ENCODE measurements at regions of chrX and their contacts with region 1.

Region 1: GRCh38 chrX:20066968-20067708 is 49.6 kb downstream of the MAP7D2 start:
- DNase-seq: peak; percentile 35
- ATAC-seq: peak; percentile 76
- H3K4me3 ChIP-seq: no peak overlapping the region
- H3K27ac ChIP-seq: no peak overlapping the region
- H3K4me1 ChIP-seq: peaks cover 10% of the 10 kb centered on the region
- H3K27me3 ChIP-seq: no peaks in the 10 kb centered on the region
- CTCF ChIP-seq: peak; percentile 74
- EP300 ChIP-seq: no peak
- POLR2A ChIP-seq: no peak
- RAD21 ChIP-seq: 0 out of 2 replicates have a peak, but pooled peaks have one; percentile 46

Region 2: DNA sequence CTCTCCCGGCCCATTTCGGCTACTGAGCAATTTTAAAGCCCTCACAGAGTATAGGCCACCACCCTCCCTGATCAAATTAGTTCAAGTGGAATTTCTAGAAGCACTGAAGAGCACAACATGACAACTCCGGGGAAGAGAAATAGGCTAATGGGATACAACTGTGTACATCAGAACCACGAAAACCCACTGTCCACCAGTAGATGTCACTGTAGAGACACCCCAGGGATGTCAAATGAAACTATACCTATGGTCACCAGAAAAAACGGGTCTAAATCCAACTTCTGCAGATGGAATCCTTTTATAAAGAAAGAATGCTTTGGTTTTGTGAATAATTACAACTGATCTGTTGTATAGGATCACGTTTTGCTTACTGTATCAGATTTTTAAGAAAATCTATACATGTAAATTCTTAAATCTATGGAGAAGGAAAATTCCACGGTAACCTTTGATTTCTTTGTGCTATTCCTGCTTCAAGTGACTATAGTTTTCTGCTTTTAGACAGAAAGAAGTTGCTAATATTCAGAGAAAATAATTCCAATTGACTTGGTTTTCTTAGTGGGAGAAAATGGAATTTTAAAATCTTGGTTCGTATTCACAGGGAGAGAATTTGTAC is 522.3 kb before region 1 on chrX:
- CTCF ChIA-PET with region 1: no interaction called
- POLR2A ChIA-PET with region 1: no interaction called
- in situ Hi-C with region 1: no loop called
- intact Hi-C with region 1: loop called (anchors 2 kb)
- DNase-seq: peak; percentile 34
- ATAC-seq: peak; percentile 75
- H3K4me3 ChIP-seq: no peak overlapping the region
- H3K27ac ChIP-seq: no peak overlapping the region
- H3K4me1 ChIP-seq: no peaks in the 10 kb centered on the region
- H3K27me3 ChIP-seq: no peaks in the 10 kb centered on the region
- CTCF ChIP-seq: peak; percentile 68
- EP300 ChIP-seq: no peak
- POLR2A ChIP-seq: no peak
- RAD21 ChIP-seq: peak; percentile 44; the same call in 1 of the 2 replicates

Region 3: DNA sequence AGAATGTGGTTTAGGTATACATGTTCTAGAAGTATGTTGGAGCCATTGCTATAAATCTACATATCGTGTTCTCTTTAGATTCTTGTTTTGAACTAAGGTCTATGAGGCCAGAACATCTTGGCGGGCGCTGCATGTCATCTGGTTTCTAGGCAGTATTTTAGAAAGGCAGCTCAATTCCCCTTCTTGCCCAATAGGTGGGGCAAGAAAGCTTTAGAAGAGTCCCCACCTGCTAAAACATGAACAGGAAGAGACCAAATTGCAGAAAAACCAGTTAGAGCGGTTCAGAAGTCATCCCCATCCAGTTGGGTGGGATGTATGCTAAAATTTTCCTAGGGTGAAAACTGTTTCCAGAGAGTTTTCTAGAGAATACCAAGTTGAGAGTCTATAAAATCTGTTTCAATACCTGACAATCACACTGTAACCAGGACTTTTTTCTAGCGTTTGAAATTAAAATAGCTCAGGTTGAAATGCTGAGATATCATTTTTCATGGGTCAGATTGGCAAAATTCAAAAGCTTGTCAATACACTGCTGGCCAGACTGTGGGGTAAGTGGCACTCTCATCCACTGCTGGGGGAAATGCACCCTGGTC is 162.3 kb before region 1 on chrX:
- CTCF ChIA-PET with region 1: interaction called, 12 read pairs
- POLR2A ChIA-PET with region 1: no interaction called
- in situ Hi-C with region 1: loop called (anchors 10 kb)
- intact Hi-C with region 1: no loop called
- DNase-seq: peak; percentile 31
- ATAC-seq: peak; percentile 69
- H3K4me3 ChIP-seq: no peak overlapping the region
- H3K27ac ChIP-seq: no peak overlapping the region
- H3K4me1 ChIP-seq: no peaks in the 10 kb centered on the region
- H3K27me3 ChIP-seq: no peaks in the 10 kb centered on the region
- CTCF ChIP-seq: peak; percentile 71
- EP300 ChIP-seq: no peak
- POLR2A ChIP-seq: no peak
- RAD21 ChIP-seq: peak; percentile 35; the same call in 1 of the 2 replicates

Region 4: DNA sequence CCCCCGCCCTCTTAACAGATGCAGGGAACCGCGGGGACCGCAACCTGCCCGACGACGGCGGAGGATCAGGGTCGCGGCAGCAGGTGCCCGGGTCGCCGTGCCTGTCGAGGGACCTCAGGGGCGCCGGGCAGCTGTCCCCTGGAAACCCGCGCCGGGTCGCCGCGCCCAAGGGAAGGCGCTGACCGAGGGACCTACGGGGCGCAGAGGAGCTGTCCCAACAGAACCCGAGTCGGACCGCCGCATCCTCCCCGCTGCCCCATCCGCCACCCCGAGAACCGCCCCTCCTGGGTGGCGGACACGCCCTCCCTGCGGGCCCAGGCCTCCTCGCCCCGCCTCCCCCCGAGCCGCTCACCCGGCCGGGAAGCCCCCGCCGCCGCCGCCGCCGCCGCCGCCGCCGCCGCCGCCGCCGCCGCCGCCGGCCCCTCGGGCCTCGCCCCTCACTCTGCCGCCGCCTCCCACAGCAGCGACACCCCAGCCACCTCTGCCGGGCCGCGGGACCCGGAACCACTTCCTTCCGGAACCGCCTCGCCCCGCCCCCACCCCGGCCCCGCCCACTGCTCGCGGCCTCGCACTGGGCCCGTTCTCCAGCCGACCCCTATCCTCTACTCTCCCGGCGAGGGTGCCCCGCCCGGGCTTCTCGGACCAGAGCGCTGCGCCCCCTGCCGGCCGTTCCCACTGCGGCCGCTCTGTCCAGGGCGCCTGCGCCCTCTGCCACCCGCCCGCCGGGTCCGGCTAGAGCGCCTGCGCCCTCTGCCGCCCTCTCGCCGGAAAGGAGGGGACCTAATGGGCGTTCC is 76.4 kb before region 1 on chrX and contains the start of gene BCLAF3:
- CTCF ChIA-PET with region 1: interaction called, 4 read pairs
- POLR2A ChIA-PET with region 1: no interaction called
- in situ Hi-C with region 1: no loop called
- intact Hi-C with region 1: loop called (anchors 5 kb)
- DNase-seq: peak; percentile 79
- ATAC-seq: peak; percentile 93
- H3K4me3 ChIP-seq: peak within 1 kb of the TSS; percentile 55 to 77 (median 75)
- H3K27ac ChIP-seq: peak within 1 kb of the TSS; percentile 33
- H3K4me1 ChIP-seq: peaks cover 13% of the 10 kb centered on the region; the same call in 1 of the 2 replicates
- H3K27me3 ChIP-seq: no peaks in the 10 kb centered on the region
- CTCF ChIP-seq: peak; percentile 84
- EP300 ChIP-seq: no peak
- POLR2A ChIP-seq: no peak
- RAD21 ChIP-seq: peak; percentile 70
- total RNA-seq, gene BCLAF3: 2.3 and 2.7 TPM in 2 replicates

Region 5: DNA sequence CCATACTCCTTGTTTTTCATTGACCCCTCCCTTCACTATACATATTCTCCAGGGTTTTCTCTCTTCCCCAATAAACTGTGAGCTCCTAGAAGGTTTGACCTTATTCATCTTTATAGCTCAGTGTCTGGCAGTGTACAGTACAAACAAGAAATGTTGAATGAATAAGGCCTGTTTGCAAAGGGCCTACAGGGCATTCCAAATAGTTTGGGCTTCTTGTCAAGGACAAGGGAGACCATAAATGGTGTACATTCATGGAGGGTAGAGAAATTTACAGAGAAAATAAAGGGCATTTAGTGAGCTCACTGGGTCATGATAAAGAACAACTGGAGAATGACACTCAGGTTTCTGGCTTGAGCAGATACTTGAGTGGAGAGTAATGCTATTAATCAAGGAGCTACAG is 122.0 kb after region 1 on chrX:
- CTCF ChIA-PET with region 1: no interaction called
- POLR2A ChIA-PET with region 1: no interaction called
- in situ Hi-C with region 1: no loop called
- intact Hi-C with region 1: no loop called
- DNase-seq: peak; percentile 30
- ATAC-seq: peak; percentile 47; the same call in 2 of the 3 replicates
- H3K4me3 ChIP-seq: no peak overlapping the region
- H3K27ac ChIP-seq: no peak overlapping the region
- H3K4me1 ChIP-seq: no peaks in the 10 kb centered on the region
- H3K27me3 ChIP-seq: no peaks in the 10 kb centered on the region
- CTCF ChIP-seq: no peak
- EP300 ChIP-seq: no peak
- POLR2A ChIP-seq: no peak
- RAD21 ChIP-seq: no peak